Activated naive CD4-positive, alpha-beta T cell treated with anti-CD3 and anti-CD28 coated beads for 36 hours (primary cell): ENCODE measurements at regions of chr22 and their contacts with region 1.

Region 1: DNA sequence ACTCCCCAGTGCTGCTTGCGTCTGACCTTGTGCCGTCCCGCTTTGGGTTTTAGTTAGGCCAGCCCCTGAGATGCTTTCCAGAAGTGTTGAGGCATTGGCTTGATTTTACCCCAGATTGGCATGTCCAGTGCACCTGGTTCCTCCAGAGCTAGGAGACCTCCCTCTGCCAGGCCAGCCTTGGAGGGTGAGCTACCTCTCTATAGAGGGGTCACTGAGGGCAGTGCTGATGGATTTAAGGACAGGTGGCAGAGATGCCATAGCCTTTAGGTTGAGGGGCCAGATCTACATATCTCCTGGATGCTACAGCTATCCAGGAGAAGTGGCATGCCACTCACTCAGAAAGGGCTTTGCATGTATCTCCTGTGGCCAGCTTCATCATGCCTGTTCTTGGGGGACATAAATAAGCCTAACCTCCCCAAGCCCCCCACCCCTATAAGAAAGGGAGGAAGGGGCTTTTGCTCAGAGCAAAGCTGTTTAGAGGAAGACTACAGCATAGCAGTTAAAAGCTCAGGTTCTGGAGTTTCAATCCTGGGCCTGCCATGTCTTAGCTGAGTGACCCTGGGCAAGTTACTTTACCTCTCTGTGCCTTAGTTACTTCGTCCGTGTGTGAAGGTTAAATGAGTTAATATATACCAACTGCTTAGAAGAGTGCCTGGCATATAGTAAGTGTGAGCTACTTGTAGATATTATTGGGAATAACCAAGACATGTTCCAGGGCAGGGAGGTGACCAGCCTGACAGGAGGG is 6.4 kb downstream of the UBE2L3 start:
- DNase-seq: no peak
- H3K4me3 Mint-ChIP-seq: no peak overlapping the region
- H3K27ac Mint-ChIP-seq: no peak overlapping the region
- H3K4me1 Mint-ChIP-seq: peaks cover 77% of the 10 kb centered on the region
- H3K27me3 Mint-ChIP-seq: no peaks in the 10 kb centered on the region

Region 2: DNA sequence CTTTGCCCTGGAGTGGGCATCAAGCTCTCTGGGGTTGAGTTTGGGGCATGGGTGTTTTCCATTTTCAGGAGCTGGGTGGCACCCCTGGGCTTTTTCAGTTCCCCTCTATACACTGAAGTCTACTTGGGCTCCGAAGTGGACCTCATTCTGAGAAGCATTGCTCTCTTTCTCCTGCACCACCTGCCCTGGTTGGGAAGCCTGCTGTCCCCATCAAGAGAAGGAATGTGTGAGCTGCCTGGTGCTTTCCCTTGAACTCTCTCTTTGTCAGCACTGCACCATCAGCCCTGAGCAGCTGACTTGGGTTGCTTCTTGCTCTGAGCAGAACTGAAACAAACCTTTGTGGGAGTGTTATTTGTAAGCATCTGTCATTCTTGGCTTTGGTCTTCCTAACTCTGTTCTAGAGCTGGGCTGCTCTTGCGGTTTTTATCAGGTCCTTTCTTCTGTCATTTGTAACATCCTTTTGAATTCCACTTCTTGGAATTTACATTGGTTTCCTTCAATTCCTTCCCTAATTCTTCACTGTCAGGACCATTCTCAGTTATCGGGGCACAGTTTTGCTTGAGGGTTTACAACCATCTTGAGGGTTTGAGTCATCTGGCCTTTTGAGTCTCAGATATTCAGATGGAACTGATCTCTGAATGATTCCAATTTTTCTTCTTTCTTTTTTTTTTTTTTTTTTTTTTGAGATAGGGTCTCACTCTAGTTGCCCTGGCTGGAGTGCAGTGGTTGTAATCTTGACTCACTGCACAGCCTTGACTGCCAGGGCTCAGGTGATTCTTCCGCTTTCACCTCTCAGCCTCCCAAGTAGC is 14.1 kb after region 1 on chr22:
- CTCF ChIA-PET with region 1: interaction called, 3 read pairs
- intact Hi-C with region 1: loop called (anchors 1 kb)
- DNase-seq: peak; percentile 79
- H3K4me3 Mint-ChIP-seq: no peak overlapping the region
- H3K27ac Mint-ChIP-seq: peak overlapping the region; percentile 72
- H3K4me1 Mint-ChIP-seq: peaks cover 62% of the 10 kb centered on the region
- H3K27me3 Mint-ChIP-seq: no peaks in the 10 kb centered on the region

Region 3: DNA sequence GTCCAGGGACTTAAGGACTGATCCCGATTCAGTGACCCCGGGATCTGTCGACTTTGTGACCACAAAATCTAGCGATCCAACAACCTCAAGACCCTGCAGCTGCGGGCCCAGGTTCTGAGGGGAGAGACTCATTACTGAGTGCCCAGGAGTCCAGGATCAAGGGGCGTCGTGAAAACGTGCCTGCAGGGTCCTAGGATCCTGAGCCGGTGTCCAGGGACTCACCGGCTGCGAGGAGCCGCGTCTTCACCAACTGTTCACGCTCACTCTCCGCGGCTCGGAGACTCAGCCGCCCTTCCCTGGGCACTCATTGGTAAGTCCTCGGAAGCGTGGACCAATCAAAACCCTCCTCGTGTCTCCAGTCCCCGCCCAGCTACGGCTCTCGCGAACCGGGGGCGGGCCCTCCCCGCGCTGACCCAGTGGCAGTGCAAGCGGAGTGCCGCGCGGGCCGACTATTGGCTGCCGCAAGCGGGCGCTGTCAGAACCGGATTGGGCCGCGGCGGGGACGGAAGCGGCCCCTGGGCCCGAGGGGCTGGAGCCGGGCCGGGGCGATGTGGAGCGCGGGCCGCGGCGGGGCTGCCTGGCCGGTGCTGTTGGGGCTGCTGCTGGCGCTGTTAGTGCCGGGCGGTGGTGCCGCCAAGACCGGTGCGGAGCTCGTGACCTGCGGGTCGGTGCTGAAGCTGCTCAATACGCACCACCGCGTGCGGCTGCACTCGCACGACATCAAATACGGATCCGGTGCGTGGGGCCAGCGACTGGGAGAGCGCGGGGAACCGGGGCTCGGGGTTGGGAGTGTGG is 68.1 kb after region 1 on chr22 and contains the start of gene SDF2L1:
- CTCF ChIA-PET with region 1: interaction called, 12 read pairs
- intact Hi-C with region 1: no loop called
- DNase-seq: peak; percentile 99
- H3K4me3 Mint-ChIP-seq: peak within 1 kb of the TSS; percentile 90
- H3K27ac Mint-ChIP-seq: peak within 1 kb of the TSS; percentile 73
- H3K4me1 Mint-ChIP-seq: peaks cover 30% of the 10 kb centered on the region
- H3K27me3 Mint-ChIP-seq: no peaks in the 10 kb centered on the region
- total RNA-seq, gene SDF2L1: 21.7 to 22.3 TPM